ENCODE measurements at regions of chr1 and their contacts with region 1.

Region 1: DNA sequence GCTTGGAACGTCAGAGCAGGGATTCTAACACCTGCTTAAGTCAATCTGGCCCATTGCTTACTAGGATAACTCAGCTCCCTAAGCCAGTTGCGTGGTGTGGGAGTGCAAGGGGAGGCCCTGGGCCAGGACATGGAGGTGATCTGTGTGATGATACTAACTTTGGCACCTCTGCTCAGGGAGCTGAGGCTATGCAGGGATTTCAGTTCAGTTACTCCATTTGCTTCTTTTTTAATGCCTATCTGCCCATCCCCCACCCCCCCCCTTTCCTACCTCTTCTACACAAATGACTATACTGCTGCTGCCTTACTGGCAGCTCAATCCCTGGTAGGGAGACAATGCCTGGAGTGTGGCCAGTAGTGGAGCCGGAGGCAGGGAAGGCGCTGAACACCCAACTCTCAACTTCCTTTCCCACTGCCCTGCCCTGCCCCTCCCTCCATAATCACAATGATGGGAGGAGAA is 19.5 kb downstream of the INKA2 start:
- DNase-seq: no peak
- H3K4me3 ChIP-seq: no peak overlapping the region
- H3K27ac ChIP-seq: peak overlapping the region in 2 of 5 donors; percentile 55 to 56
- H3K4me1 ChIP-seq: peaks cover 7 to 55% (median 37%) of the 10 kb centered on the region in 4 donors
- H3K27me3 ChIP-seq: no peaks in the 10 kb centered on the region
- CTCF ChIP-seq: no peak
- EP300 ChIP-seq: no peak
- POLR2A ChIP-seq: no peak

Region 2: GRCh38 chr1:111346089-111346885 is 373.4 kb before region 1 on chr1:
- intact Hi-C with region 1: no loop called
- DNase-seq: peak; percentile 89 to 97
- H3K4me3 ChIP-seq: peak overlapping the region; percentile 57 to 67 (median 60)
- H3K27ac ChIP-seq: peak overlapping the region; percentile 62 to 86 (median 79)
- H3K4me1 ChIP-seq: peaks cover 0 to 13% (median 11%) of the 10 kb centered on the region in 4 donors
- H3K27me3 ChIP-seq: no peaks in the 10 kb centered on the region
- CTCF ChIP-seq: peak in 1 of 7 experiments; percentile 14
- EP300 ChIP-seq: no peak
- POLR2A ChIP-seq: no peak

Region 3: GRCh38 chr1:111654839-111655238 is 64.9 kb before region 1 on chr1:
- intact Hi-C with region 1: no loop called
- DNase-seq: no peak
- H3K4me3 ChIP-seq: no peak overlapping the region
- H3K27ac ChIP-seq: no peak overlapping the region
- H3K4me1 ChIP-seq: peaks cover 5 to 86% (median 44%) of the 10 kb centered on the region in 4 donors
- H3K27me3 ChIP-seq: no peaks in the 10 kb centered on the region
- CTCF ChIP-seq: no peak
- EP300 ChIP-seq: no peak
- POLR2A ChIP-seq: no peak

Region 4: DNA sequence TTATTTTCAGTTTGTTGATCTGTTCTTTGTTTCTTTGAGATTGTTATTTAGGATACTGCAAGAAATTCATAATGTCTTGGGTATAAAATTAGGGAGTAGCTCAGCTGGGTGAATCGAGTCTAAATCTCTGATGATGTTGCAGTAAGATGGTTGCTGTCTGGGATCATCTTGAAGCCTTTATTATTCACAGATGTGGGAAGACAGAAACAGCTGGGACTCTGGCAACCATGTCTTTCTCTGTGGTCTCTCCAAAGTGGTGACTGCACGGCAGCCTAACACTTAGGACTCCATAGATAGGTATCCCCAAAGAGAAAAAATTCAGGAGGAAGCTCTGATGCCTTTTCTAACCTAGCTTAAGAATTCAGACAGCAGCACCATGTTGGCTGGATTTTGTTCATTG is 47.4 kb before region 1 on chr1:
- intact Hi-C with region 1: no loop called
- DNase-seq: no peak
- H3K4me3 ChIP-seq: no peak overlapping the region
- H3K27ac ChIP-seq: peak overlapping the region in 4 of 5 donors; percentile 4 to 66 (median 52)
- H3K4me1 ChIP-seq: peaks cover 12 to 64% (median 35%) of the 10 kb centered on the region in 4 donors
- H3K27me3 ChIP-seq: no peaks in the 10 kb centered on the region
- CTCF ChIP-seq: no peak
- EP300 ChIP-seq: no peak
- POLR2A ChIP-seq: no peak

Region 5: GRCh38 chr1:111769517-111770146 is 49.9 kb after region 1 on chr1:
- intact Hi-C with region 1: loop called (anchors 10 kb)
- DNase-seq: peak in 1 of 2 donors; percentile 86
- H3K4me3 ChIP-seq: no peak overlapping the region
- H3K27ac ChIP-seq: peak overlapping the region in 1 of 5 donors; percentile 19
- H3K4me1 ChIP-seq: peaks cover 0 to 6% (median 3%) of the 10 kb centered on the region in 4 donors
- H3K27me3 ChIP-seq: no peaks in the 10 kb centered on the region
- CTCF ChIP-seq: peak in 5 of 7 experiments; percentile 64 to 83 (median 74)
- EP300 ChIP-seq: no peak
- POLR2A ChIP-seq: no peak